HepG2 (cell line): ENCODE measurements at regions of chr17 and their contacts with region 1.

Region 1: GRCh38 chr17:63773381-63774140 is at the start of gene CCDC47:
- DNase-seq: peak; percentile 100
- ATAC-seq: peak; percentile 91
- H3K4me3 ChIP-seq: peak within 1 kb of the TSS; percentile 93 to 99 (median 94)
- H3K27ac ChIP-seq: peak within 1 kb of the TSS; percentile 100
- H3K4me1 ChIP-seq: peaks cover 45% of the 10 kb centered on the region
- H3K27me3 ChIP-seq: peaks cover 0 to 6% of the 10 kb centered on the region in 2 experiments; a peak in 1 of 5 replicates
- CTCF ChIP-seq: peak; percentile 4; the same call in 1 of the 2 replicates
- EP300 ChIP-seq: peak; percentile 47 to 68
- POLR2A ChIP-seq: peak; percentile 88 to 96
- RAD21 ChIP-seq: no peak; the same call in none of the 2 replicates
- total RNA-seq, gene CCDC47: 61.6 and 99.5 TPM in 2 replicates

Region 2: DNA sequence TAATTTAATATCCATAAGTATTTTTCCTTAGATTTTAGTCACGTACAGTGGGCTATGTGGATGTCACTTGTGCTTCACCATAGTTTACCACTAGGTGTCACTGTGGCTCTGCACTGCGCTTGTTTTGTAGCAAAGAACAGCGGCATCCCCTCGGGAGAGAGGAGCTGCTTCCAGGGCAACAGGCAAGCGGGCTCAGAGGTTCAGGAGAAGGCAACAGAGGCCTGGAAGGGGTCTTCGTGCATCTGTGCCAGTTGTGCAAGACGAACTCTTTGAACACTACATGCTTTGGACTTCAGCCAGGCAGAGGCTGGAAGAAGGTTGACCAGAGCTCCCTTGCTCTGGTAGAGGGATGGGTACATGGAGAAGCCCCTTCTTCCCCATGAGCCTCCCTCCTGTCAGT is 348.1 kb before region 1 on chr17:
- CTCF ChIA-PET with region 1: no interaction called
- POLR2A ChIA-PET with region 1: no interaction called
- in situ Hi-C with region 1: no loop called
- intact Hi-C with region 1: loop called (anchors 10 kb)
- DNase-seq: peak; percentile 80
- ATAC-seq: peak; percentile 86
- H3K4me3 ChIP-seq: no peak overlapping the region
- H3K27ac ChIP-seq: no peak overlapping the region
- H3K4me1 ChIP-seq: peaks cover 21% of the 10 kb centered on the region
- H3K27me3 ChIP-seq: peaks cover 13 to 65% of the 10 kb centered on the region in 2 experiments; a peak in 4 of 5 replicates
- CTCF ChIP-seq: peak; percentile 97
- EP300 ChIP-seq: no peak
- POLR2A ChIP-seq: no peak
- RAD21 ChIP-seq: peak; percentile 97

Region 3: DNA sequence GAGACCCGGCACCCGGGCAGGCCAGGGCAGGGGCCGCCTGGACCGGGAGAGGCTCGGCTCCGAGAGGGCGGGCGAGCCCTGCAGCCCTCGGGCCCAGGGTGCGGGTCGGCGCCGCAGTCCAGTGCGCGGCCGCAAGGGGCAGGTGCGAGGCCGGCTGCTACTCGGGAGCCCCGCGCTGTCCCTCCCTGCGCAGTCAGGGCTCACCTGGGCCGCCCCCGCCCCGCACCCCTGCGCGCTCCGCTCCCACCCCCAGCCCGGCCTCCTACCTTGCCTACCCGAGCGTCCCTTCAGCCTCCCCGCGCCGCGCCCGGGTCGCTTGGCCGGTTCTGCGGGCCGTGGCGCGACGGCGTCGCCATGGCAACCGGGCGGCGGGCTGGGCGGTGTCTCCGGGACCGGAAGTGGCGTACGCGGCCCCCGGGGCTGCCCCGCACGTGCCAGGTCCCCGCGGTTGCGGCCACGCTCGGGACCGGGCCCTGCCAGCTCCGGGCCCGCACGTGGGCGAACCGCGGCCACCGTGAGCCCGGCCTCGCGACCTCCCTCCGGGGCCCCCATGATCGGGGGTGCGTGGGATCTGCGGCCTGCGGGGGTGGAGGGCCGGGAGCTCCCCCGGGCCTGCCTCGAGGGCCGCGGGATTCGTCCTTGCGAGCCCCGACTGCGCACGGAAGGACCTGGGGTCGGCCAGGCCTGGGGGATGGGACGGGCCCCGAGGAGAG is 327.4 kb before region 1 on chr17 and contains the start of gene CYB561:
- CTCF ChIA-PET with region 1: no interaction called
- POLR2A ChIA-PET with region 1: no interaction called
- in situ Hi-C with region 1: no loop called
- intact Hi-C with region 1: no loop called
- DNase-seq: no peak
- ATAC-seq: peak; percentile 93
- H3K4me3 ChIP-seq: peak within 1 kb of the TSS; percentile 49 to 71 (median 52); a peak in 4 of 6 replicates
- H3K27ac ChIP-seq: no peak within 1 kb of the TSS
- H3K4me1 ChIP-seq: peaks cover 16% of the 10 kb centered on the region
- H3K27me3 ChIP-seq: peaks cover 6 to 36% of the 10 kb centered on the region in 2 experiments; a peak in 4 of 5 replicates
- CTCF ChIP-seq: peak; percentile 62
- EP300 ChIP-seq: no peak
- POLR2A ChIP-seq: no peak
- RAD21 ChIP-seq: peak; percentile 43; the same call in 1 of the 2 replicates
- total RNA-seq, gene CYB561: 3.1 and 6.7 TPM in 2 replicates

Region 4: DNA sequence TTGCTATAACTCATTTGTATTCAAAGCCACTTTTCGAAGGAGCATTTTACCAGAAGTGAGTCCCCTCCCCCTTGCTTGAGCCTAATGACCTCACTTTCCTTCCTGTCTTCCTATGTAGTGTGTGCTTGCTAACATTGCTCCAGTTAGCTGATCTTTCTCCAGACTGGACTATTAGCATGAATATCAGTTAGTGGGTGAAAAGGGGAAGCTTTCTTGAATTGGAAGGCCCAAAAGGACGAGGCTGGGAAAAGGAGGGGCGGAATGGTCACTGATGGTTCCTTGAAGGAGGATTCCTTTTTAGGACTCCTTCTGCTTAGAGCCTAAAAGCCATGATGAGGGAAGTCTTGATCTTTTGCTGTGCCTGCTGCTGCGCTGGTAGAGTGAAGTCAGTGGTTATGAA is 139.4 kb before region 1 on chr17:
- CTCF ChIA-PET with region 1: no interaction called
- POLR2A ChIA-PET with region 1: no interaction called
- in situ Hi-C with region 1: no loop called
- intact Hi-C with region 1: no loop called
- DNase-seq: no peak
- ATAC-seq: no peak
- H3K4me3 ChIP-seq: no peak overlapping the region
- H3K27ac ChIP-seq: no peak overlapping the region
- H3K4me1 ChIP-seq: peaks cover 10% of the 10 kb centered on the region
- H3K27me3 ChIP-seq: no peaks in the 10 kb centered on the region
- CTCF ChIP-seq: no peak
- EP300 ChIP-seq: no peak
- POLR2A ChIP-seq: no peak
- RAD21 ChIP-seq: no peak

Region 5: GRCh38 chr17:63722403-63722802 is 51.2 kb before region 1 on chr17:
- CTCF ChIA-PET with region 1: no interaction called
- POLR2A ChIA-PET with region 1: no interaction called
- in situ Hi-C with region 1: no loop called
- intact Hi-C with region 1: no loop called
- DNase-seq: no peak
- ATAC-seq: no peak
- H3K4me3 ChIP-seq: no peak overlapping the region
- H3K27ac ChIP-seq: no peak overlapping the region
- H3K4me1 ChIP-seq: no peaks in the 10 kb centered on the region
- H3K27me3 ChIP-seq: no peaks in the 10 kb centered on the region
- CTCF ChIP-seq: no peak
- EP300 ChIP-seq: no peak
- POLR2A ChIP-seq: no peak
- RAD21 ChIP-seq: no peak

Region 6: DNA sequence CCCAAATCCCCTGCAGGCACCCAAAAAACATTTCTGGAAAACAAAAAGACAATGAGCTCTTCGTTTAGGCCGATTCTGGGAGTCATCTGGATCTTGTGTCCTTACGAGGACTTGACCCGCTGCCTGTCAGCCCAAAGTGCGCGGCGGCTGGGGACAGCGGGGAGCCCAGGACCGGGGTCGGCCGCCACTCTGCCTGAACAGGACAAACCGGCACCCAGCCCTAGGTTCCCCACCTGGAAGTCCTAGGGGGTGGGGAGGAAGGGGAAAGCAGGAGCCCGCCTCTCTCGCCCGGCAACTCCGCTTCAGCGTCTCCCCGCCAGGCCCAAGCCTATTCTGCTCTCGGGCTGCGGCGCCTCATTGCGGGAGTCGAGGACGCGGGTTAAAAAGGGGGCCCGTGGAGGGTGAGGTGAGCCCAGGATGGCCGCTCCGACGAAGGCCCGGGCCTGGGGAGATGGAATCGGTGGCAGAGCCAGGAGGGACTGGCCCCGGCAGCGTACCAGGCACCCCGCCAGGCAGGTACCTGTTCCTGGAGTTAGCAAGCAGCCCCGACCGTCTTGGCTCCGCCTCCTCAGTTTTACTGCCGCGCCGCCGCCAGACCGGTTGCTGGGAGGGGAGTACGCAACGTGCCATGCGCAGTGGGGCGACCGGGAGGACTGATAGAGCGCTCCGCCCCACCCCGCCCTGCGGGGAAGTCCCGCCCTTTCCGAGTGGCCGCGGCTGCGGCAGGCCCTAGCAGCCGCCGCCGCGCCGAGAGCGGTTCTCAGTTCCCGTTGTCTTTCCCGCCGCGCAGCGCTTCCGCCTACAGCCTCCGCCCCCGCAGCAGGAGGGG is 32.1 kb before region 1 on chr17 and contains the start of gene STRADA:
- CTCF ChIA-PET with region 1: no interaction called
- POLR2A ChIA-PET with region 1: interaction called, 77 read pairs
- in situ Hi-C with region 1: no loop called
- intact Hi-C with region 1: loop called (anchors 1 kb)
- DNase-seq: peak; percentile 96
- ATAC-seq: peak; percentile 96
- H3K4me3 ChIP-seq: peak within 1 kb of the TSS; percentile 75 to 99 (median 92)
- H3K27ac ChIP-seq: peak within 1 kb of the TSS; percentile 84
- H3K4me1 ChIP-seq: peaks cover 14% of the 10 kb centered on the region
- H3K27me3 ChIP-seq: no peaks in the 10 kb centered on the region; a peak in 1 of 5 replicates
- CTCF ChIP-seq: no peak
- EP300 ChIP-seq: no peak
- POLR2A ChIP-seq: peak; percentile 78 to 90
- RAD21 ChIP-seq: peak; percentile 45
- total RNA-seq, gene STRADA: 16.1 and 17.9 TPM in 2 replicates

Region 7: GRCh38 chr17:63785556-63785955 is 12.0 kb after region 1 on chr17:
- CTCF ChIA-PET with region 1: no interaction called
- POLR2A ChIA-PET with region 1: interaction called, 72 read pairs
- in situ Hi-C with region 1: no loop called
- intact Hi-C with region 1: no loop called
- DNase-seq: no peak
- ATAC-seq: peak; percentile 52; the same call in 2 of the 3 replicates
- H3K4me3 ChIP-seq: no peak overlapping the region
- H3K27ac ChIP-seq: peak overlapping the region; percentile 52
- H3K4me1 ChIP-seq: peaks cover 56% of the 10 kb centered on the region
- H3K27me3 ChIP-seq: no peaks in the 10 kb centered on the region
- CTCF ChIP-seq: no peak
- EP300 ChIP-seq: no peak
- POLR2A ChIP-seq: no peak
- RAD21 ChIP-seq: no peak

Region 8: GRCh38 chr17:63827002-63827771 is 53.6 kb after region 1 on chr17 and contains the starts of genes FTSJ3 and PSMC5:
- CTCF ChIA-PET with region 1: no interaction called
- POLR2A ChIA-PET with region 1: interaction called, 35 read pairs
- in situ Hi-C with region 1: no loop called
- intact Hi-C with region 1: loop called (anchors 5 kb)
- DNase-seq: peak; percentile 95
- ATAC-seq: peak; percentile 89
- H3K4me3 ChIP-seq: peak within 1 kb of the TSS; percentile 84 to 98 (median 95)
- H3K27ac ChIP-seq: peak within 1 kb of the TSS; percentile 91
- H3K4me1 ChIP-seq: peaks cover 31% of the 10 kb centered on the region
- H3K27me3 ChIP-seq: no peaks in the 10 kb centered on the region; a peak in 1 of 5 replicates
- CTCF ChIP-seq: peak; percentile 91
- EP300 ChIP-seq: no peak
- POLR2A ChIP-seq: peak; percentile 75 to 91
- RAD21 ChIP-seq: no peak
- total RNA-seq, gene FTSJ3: 55.8 and 64.2 TPM in 2 replicates
- total RNA-seq, gene PSMC5: 35.3 and 81.4 TPM in 2 replicates

Region 9: DNA sequence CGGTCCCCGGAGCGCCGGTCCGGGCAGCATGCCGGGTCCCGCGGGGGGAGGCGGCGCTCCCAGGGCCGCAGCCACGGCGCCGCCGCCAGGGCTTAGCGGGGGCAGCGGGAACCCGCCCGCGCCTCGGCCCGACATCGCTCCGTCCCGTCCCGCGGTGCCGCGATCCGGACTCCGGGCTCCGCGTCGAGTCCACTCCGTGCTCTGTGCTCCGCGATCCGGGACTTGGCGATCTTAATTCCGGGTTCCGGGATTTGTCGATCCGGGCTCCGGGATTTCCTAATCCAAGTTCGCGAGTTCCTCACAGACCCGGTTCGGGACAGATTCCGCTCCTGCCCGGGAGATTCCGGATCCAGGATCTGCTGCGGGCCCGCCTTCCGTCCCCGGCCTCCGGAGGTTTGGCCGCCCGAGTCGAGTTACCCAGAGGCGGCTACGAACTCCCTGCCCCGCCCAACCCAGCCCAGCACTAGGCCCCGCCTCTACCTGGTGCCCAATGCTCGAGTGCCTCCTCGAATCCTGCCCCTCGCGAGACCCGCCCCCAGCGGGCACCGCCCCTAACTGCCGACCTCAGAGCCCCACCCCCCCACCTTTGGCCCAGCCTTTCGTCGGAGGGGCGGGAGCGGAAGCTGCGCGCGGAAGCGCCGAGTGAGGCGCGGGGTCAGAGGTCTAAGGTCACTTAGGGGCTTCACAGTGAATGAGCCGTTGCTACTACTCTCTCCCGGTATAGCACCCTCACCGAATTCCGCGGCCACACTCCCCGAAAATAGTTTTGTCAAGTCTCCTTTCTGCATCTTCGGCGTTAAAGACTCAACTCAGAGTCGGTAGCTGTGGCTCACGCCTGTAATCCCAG is 69.2 kb after region 1 on chr17 and contains the start of gene SMARCD2:
- CTCF ChIA-PET with region 1: no interaction called
- POLR2A ChIA-PET with region 1: interaction called, 33 read pairs
- in situ Hi-C with region 1: no loop called
- intact Hi-C with region 1: loop called (anchors 5 kb)
- DNase-seq: peak; percentile 99
- ATAC-seq: peak; percentile 80
- H3K4me3 ChIP-seq: peak within 1 kb of the TSS; percentile 85 to 98 (median 97)
- H3K27ac ChIP-seq: peak within 1 kb of the TSS; percentile 92
- H3K4me1 ChIP-seq: peaks cover 44% of the 10 kb centered on the region
- H3K27me3 ChIP-seq: no peaks in the 10 kb centered on the region; a peak in 1 of 5 replicates
- CTCF ChIP-seq: peak; percentile 41
- EP300 ChIP-seq: peak; percentile 57 to 78; a peak in 3 of 4 replicates
- POLR2A ChIP-seq: peak; percentile 54 to 81
- RAD21 ChIP-seq: peak; percentile 95
- total RNA-seq, gene SMARCD2: 139 and 150 TPM in 2 replicates